ENCODE measurements at regions of chr12 and their contacts with region 1.

Region 1: GRCh38 chr12:51430231-51430906 is 5.7 kb downstream of the SLC4A8 start:
- DNase-seq: no peak
- ATAC-seq: no peak
- H3K4me3 ChIP-seq: no peak overlapping the region
- H3K27ac ChIP-seq: no peak overlapping the region
- H3K4me1 ChIP-seq: no peaks in the 10 kb centered on the region
- H3K27me3 ChIP-seq: peaks cover 0 to 5% (median 0%) of the 10 kb centered on the region in 9 donors
- CTCF ChIP-seq: no peak
- POLR2A ChIP-seq: no peak

Region 2: GRCh38 chr12:50825372-50825838 is 605.0 kb before region 1 on chr12:
- intact Hi-C with region 1: no loop called
- DNase-seq: no peak
- ATAC-seq: peak; percentile 54 to 83 (median 70)
- H3K4me3 ChIP-seq: no peak overlapping the region
- H3K27ac ChIP-seq: peak overlapping the region in 10 of 12 donors; percentile 18 to 70 (median 62)
- H3K4me1 ChIP-seq: peaks cover 0 to 11% (median 0%) of the 10 kb centered on the region in 12 donors
- H3K27me3 ChIP-seq: no peaks in the 10 kb centered on the region
- CTCF ChIP-seq: peak; percentile 30 to 66 (median 53)
- POLR2A ChIP-seq: no peak

Region 3: DNA sequence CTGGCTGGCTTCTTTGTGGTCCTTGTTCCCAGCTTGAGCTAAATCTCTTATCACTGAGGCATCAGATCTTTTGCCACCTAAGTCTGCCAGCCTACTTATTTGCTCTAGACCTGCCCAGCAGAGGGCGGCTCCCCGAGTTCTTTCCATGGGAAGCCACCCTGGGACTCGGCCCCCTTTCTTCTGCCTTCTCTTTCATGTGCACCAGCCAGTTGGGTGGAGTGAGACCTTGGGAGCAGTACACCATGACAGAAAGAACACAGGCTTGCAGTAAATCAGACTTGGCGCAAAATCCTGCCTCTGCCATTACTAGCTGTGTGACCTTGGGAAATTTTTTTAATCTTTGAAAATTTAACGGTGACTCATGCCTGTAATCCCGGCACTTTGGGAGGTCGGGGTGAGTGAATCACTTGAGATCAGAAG is 167.6 kb before region 1 on chr12:
- intact Hi-C with region 1: no loop called
- DNase-seq: no peak
- ATAC-seq: peak in 1 of 4 donors; percentile 42
- H3K4me3 ChIP-seq: no peak overlapping the region
- H3K27ac ChIP-seq: no peak overlapping the region
- H3K4me1 ChIP-seq: no peaks in the 10 kb centered on the region
- H3K27me3 ChIP-seq: no peaks in the 10 kb centered on the region
- CTCF ChIP-seq: peak in 5 of 12 donors; percentile 10 to 37 (median 19)
- POLR2A ChIP-seq: no peak

Region 4: DNA sequence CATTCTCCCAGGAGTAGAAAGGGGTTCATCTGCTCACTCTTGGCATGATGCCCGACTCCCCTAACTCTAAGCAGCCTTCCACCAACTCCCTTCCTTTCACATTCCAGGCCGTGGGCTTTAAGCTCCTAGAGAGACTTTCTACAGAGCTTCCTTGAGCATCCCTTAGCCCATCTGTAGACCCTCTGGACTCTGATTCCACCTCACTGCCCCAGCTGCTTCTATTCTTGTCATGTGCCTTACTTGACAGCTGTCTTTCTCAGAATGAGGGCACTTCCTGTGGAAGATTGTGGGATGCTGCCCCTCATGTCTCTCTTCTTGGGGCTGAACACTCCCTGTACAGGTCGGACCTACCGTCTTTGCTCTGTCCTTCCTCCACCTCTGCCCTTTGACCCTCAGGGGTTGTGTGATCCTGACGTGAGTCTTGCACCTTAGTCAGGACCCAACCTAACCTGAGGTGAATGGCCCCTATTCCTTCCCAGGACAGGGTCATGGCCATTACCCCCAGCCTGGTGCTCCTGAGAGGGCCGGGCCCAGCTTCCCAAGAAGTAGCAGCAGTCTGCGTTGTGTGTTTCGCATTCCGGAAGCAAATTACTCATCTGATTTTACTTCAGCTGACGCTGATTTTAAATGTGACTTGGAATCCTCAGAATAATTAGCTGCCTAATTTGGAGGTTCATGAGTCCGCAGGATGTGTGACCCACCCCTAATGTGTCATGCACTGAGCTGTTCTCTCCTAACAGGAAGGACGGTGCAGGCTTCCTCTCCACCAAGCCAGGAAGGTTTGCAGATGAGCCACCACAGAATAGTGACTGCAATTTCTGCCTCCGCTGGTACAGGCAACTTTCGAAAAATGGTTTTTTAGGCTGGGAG is 36.5 kb before region 1 on chr12:
- intact Hi-C with region 1: loop called in 1 of 10 experiments (anchors 2 kb)
- DNase-seq: peak in 3 of 5 donors; percentile 24 to 49 (median 35)
- ATAC-seq: peak; percentile 66 to 88 (median 70)
- H3K4me3 ChIP-seq: peak overlapping the region in 1 of 12 donors; percentile 23
- H3K27ac ChIP-seq: peak overlapping the region in 6 of 12 donors; percentile 29 to 90 (median 68)
- H3K4me1 ChIP-seq: peaks cover 0 to 68% (median 7%) of the 10 kb centered on the region in 12 donors
- H3K27me3 ChIP-seq: peaks cover 0 to 39% (median 14%) of the 10 kb centered on the region in 9 donors
- CTCF ChIP-seq: no peak
- POLR2A ChIP-seq: no peak

Region 5: GRCh38 chr12:51460519-51460918 is 30.1 kb after region 1 on chr12:
- intact Hi-C with region 1: no loop called
- DNase-seq: no peak
- ATAC-seq: no peak
- H3K4me3 ChIP-seq: no peak overlapping the region
- H3K27ac ChIP-seq: no peak overlapping the region
- H3K4me1 ChIP-seq: no peaks in the 10 kb centered on the region
- H3K27me3 ChIP-seq: no peaks in the 10 kb centered on the region
- CTCF ChIP-seq: no peak
- POLR2A ChIP-seq: no peak